Ascending aorta (tissue), 2 donors: ENCODE measurements at regions of chr6 and their contacts with region 1.

Region 1: DNA sequence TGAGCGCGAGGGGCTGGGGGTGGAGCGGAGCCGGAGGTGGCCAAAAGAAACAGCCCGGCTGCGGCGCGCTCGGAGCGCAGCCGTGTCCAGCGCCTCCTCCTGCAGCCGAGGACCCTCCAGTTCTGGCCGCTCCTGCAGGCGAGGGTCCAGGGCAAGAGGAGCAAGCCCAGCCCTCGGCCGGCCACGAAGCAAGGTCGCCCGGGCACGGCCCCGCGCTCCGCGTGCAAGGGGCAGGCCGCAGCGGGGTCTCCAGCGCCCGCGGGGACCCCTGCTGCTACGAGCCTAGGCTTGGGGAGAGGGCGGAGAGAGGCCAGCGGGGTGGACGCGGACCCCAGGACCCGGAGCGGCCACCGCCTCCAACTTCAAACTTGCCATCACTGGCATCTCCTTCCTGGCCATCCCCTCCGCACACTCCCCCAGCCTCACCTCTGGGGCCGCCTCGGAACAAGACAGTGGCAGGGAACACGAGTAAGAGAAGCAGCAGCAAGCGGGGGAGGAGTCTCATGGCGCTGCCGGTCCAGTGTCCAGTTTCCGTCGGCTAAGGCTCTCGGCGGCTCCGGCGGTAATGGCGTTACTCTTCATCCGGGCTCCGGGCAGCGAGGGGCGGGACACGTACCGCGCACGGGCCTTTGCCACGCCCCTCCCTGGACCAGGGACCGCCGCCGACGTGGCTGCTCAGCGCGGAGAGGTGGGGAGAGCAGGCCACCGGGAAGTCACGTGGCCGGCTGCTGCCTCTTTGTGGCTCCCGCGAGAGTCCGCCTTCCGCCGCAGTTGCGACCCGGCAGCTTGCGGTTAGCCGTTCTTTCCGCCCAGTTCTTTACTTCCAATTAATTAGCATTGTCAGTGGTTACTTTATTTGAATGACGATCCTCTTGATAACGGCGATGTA is at the start of gene SSR1:
- DNase-seq: peak; percentile 94 to 99
- H3K4me3 ChIP-seq: peak within 1 kb of the TSS; percentile 69 to 99
- H3K27ac ChIP-seq: peak within 1 kb of the TSS; percentile 93 to 98
- H3K4me1 ChIP-seq: peaks cover 4 to 20% of the 10 kb centered on the region in 2 donors
- H3K27me3 ChIP-seq: no peaks in the 10 kb centered on the region
- CTCF ChIP-seq: no peak
- total RNA-seq, gene SSR1: 46.4 TPM

Region 2: GRCh38 chr6:7389451-7390225 is 76.8 kb after region 1 on chr6 and contains the starts of genes CAGE1 and RIOK1:
- intact Hi-C with region 1: loop called (anchors 1 kb)
- DNase-seq: peak; percentile 85 to 98
- H3K4me3 ChIP-seq: peak within 1 kb of the TSS; percentile 87 to 88
- H3K27ac ChIP-seq: peak within 1 kb of the TSS; percentile 91 to 92
- H3K4me1 ChIP-seq: peaks cover 0 to 8% of the 10 kb centered on the region in 2 donors
- H3K27me3 ChIP-seq: no peaks in the 10 kb centered on the region
- CTCF ChIP-seq: peak in 1 of 3 experiments; percentile 10
- total RNA-seq, gene CAGE1: not detected
- total RNA-seq, gene RIOK1: 4.9 TPM

Region 3: DNA sequence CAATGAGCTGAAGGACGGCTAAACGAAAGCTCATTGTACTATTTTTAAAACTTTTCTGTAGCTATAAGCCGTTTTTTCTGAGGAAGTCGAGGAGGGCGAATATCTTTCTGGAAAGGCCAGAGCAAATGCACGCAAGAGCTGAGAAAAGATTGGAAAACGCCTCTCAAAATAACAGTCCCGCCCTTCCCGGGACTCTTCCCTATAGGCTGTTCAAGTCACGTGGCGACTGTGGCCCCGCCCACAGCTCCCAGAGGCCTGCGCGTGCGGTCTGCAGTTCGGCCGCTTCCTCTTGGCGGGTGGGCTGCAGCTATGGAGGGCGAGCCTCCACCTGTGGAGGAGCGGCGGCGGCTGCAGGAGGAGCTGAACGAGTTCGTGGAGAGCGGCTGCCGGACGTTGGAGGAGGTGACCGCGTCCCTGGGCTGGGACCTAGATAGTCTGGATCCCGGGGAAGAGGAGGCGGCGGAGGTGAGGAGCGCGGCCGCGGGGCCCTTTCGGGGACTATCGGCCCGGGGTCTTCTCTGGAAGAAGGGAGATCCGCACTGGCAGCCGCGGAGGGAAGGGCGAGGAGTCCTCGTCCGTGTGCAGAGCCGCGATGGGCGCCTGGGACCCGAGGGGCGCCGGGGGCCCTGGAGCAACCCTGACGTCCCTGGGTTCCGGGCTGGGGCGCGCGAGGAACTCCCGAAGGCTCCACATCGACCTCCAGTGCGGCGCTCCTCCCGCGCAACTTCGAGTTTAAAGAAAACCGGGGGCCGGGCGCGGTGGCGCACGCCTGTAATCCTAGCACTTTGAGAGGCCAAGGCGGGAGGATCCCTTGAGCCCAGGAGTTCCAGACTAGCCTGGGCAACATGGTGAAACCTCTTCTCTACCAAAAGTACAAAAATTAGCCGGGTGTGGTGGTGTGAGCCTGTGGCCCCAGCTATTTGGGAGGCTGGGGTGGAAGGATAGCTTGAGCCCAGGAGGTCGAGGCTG is 277.4 kb after region 1 on chr6 and contains the start of gene SNRNP48:
- intact Hi-C with region 1: loop called (anchors 2 kb)
- DNase-seq: peak; percentile 86 to 97
- H3K4me3 ChIP-seq: peak within 1 kb of the TSS; percentile 92 to 94
- H3K27ac ChIP-seq: peak within 1 kb of the TSS; percentile 57 to 58
- H3K4me1 ChIP-seq: peaks cover 0 to 13% of the 10 kb centered on the region in 2 donors
- H3K27me3 ChIP-seq: no peaks in the 10 kb centered on the region
- CTCF ChIP-seq: peak in 1 of 3 experiments; percentile 9
- total RNA-seq, gene SNRNP48: 1.3 TPM